ENCODE measurements at regions of chr21 and their contacts with region 1.

Region 1: GRCh38 chr21:36429947-36430546 is 44.9 kb downstream of the CHAF1B start:
- DNase-seq: peak; percentile 65
- H3K4me3 Mint-ChIP-seq: peak overlapping the region; percentile 65
- H3K27ac Mint-ChIP-seq: peak overlapping the region; percentile 90
- H3K4me1 Mint-ChIP-seq: peaks cover 29% of the 10 kb centered on the region
- H3K27me3 Mint-ChIP-seq: no peaks in the 10 kb centered on the region

Region 2: GRCh38 chr21:35963920-35964451 is 466.1 kb before region 1 on chr21:
- intact Hi-C with region 1: no loop called
- DNase-seq: no peak
- H3K4me3 Mint-ChIP-seq: no peak overlapping the region
- H3K27ac Mint-ChIP-seq: no peak overlapping the region
- H3K4me1 Mint-ChIP-seq: no peaks in the 10 kb centered on the region
- H3K27me3 Mint-ChIP-seq: peaks cover 10% of the 10 kb centered on the region

Region 3: GRCh38 chr21:36460866-36461605 is 31.0 kb after region 1 on chr21:
- intact Hi-C with region 1: no loop called
- DNase-seq: no peak
- H3K4me3 Mint-ChIP-seq: no peak overlapping the region
- H3K27ac Mint-ChIP-seq: no peak overlapping the region
- H3K4me1 Mint-ChIP-seq: no peaks in the 10 kb centered on the region
- H3K27me3 Mint-ChIP-seq: no peaks in the 10 kb centered on the region

Region 4: DNA sequence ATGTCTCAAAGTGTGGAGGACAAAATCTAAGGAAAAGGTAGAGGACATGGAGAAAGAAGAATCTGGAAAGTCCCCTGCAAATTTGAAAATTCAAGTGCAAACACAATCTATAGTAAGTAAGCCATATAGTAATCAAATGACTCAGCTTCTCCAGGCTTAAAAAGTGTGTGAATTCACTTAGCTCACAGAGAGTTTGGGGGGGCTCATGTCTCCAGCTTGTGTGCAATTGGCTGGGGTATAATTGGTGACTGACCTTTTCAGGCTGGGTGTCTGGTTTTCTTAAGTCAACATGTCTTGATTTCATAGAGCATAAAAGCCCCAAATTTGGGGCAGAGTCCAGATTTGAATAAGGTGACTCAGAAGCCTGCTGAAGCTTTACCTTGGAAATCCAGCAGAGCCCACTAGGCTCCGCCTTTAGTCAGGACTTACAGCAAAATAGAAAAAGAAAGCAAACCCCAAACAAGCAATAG is 41.2 kb after region 1 on chr21:
- intact Hi-C with region 1: loop called (anchors 2 kb)
- DNase-seq: no peak
- H3K4me3 Mint-ChIP-seq: no peak overlapping the region
- H3K27ac Mint-ChIP-seq: no peak overlapping the region
- H3K4me1 Mint-ChIP-seq: peaks cover 11% of the 10 kb centered on the region
- H3K27me3 Mint-ChIP-seq: peaks cover 2% of the 10 kb centered on the region

Region 5: DNA sequence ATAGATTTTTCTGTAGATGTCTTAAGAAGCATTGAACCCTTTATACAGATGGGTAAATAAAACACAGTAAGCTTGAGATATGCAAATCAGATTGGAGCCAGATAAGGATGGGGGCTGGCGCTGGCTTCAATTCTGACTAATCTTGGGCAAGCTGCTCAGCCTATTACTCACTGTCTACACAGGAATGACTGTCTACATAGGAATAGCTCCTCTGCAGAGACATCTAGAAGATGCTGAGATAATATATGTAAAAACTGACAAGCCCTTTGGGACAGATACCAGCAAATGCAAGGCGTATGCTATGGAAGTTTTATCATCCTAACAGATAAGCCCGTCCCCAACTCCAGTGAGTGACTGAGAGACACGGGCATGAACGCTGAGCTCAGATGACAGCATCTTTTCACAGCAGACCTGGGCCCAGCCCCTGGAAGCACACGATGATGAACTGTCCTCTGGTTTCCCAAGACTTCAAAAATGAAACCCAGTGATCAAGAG is 48.2 kb after region 1 on chr21:
- intact Hi-C with region 1: loop called (anchors 2 kb)
- DNase-seq: peak; percentile 13
- H3K4me3 Mint-ChIP-seq: no peak overlapping the region
- H3K27ac Mint-ChIP-seq: no peak overlapping the region
- H3K4me1 Mint-ChIP-seq: peaks cover 16% of the 10 kb centered on the region
- H3K27me3 Mint-ChIP-seq: peaks cover 5% of the 10 kb centered on the region